ENCODE measurements at regions of chr11 and their contacts with region 1.

Region 1: GRCh38 chr11:59691156-59691555 is 22.3 kb upstream of the PATL1 start:
- DNase-seq: no peak
- H3K4me3 ChIP-seq: no peak overlapping the region
- H3K27ac ChIP-seq: no peak overlapping the region
- H3K4me1 ChIP-seq: no peaks in the 10 kb centered on the region
- H3K27me3 ChIP-seq: no peaks in the 10 kb centered on the region
- CTCF ChIP-seq: no peak
- EP300 ChIP-seq: no peak
- POLR2A ChIP-seq: no peak
- RAD21 ChIP-seq: no peak

Region 2: DNA sequence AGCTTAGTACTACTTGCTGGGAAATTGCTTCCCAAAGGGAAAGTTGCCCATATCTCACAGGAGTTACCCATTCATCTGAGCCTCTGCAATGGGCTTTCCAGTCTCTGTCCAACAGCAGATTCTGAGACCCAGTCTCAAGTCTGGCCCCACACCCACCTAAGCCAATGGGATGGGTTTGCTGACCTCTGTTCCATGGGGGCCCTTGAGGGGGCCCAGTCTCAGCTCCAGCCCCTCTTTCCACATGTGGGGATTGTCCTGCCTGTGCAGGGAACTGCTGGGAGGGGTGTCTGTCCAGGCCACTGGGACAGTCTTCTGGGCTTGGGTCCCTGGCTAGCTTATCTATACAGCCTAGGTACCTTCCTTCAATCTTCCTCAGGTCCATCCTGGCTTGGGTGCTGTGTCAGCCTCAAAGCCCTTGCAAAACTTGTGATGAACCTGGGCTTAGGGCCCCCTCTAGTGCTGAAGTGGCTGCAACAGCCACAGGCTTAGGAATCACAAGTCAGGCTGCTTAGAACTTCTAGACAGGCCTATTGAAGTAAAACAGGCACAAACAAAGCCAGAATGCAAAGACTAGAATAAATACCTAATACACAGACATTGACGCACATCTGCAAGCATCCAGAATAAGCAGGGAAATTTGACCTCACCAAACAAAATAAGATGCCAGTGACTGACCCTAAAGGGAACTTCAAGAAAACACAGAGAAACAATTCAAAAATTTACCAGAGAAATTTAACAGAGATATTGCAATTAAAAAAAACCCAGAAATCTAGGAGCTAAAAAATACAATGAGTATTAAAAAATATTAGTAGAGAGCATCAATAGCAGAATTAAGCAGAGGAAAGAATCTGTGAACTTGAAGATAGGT is 10.6 kb before region 1 on chr11:
- CTCF ChIA-PET with region 1: interaction called, 11 read pairs
- POLR2A ChIA-PET with region 1: no interaction called
- DNase-seq: peak; percentile 59 to 67
- H3K4me3 ChIP-seq: no peak overlapping the region
- H3K27ac ChIP-seq: no peak overlapping the region
- H3K4me1 ChIP-seq: 0 out of 7 replicates have a peak, but pooled peaks cover 0 to 3% (median 0%) of the 10 kb centered on the region in 4 experiments
- H3K27me3 ChIP-seq: no peaks in the 10 kb centered on the region
- CTCF ChIP-seq: peak; percentile 58 to 89 (median 74)
- EP300 ChIP-seq: no peak
- POLR2A ChIP-seq: no peak
- RAD21 ChIP-seq: peak; percentile 93 to 94

Measured in H1 (cell line).